ENCODE measurements at regions of chr3 and their contacts with region 1.

Region 1: DNA sequence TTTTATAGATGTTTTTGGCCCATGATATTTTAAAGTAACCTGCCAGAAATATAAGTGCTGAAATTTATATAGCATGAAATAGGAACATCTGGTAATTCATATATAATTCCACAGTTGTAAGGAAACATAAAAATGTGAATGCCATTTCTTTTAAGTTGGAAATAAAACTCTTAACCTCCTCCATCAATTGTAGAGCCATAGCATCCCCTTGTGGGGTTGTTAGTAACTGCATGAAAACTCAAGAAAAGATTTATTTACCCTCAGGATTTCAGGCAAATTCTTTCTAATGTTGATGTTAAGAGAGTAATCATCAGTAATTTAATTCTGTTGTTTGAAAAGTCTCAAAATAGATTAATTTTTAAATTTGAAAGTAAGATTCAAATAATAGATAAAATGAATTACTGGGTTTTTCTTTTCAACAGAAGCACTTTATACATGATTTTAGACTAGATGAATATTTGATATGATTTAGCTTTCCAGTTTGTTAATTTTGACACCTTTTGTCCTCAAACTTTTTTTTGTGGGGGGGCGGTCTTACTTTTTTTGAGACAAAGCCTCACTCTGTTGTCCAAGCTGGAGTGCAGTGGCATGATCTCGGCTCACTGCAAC is 74.7 kb downstream of the RASA2 start:
- DNase-seq: peak in 1 of 10 donors; percentile 9
- H3K4me3 ChIP-seq: no peak overlapping the region
- H3K27ac ChIP-seq: no peak overlapping the region
- H3K27me3 ChIP-seq: no peaks in the 10 kb centered on the region
- CTCF ChIP-seq: peak; percentile 83 to 100 (median 95)

Region 2: DNA sequence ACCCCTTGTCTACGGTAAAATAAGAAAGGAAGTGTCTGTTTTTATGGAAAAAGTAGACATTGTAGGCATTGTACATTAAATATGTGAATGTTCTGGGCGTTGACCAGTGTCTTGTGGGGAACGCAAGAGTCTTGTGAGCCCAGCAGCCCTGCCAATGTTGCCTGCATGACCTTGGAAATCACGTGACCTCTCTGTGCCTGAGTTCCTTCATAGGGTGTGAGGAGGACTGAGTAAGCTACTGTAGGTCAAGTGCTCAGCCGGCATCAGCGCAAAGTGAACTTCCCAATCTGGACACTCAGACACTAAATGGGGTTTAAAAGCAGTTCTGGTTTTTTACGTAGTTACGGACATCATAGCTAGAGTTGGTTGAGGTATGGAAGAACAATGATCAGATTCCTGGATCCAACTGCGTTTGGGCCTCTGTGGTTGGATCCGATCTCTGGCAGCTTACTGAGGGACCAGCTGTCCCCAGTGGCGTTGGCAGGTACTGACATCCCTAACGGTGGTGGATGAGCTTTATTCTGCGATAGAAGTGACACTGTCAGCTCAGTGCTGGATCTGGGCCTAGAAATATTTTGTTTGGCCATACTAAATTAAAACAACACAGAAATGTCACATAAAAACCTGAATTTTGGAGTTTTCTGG is 446.6 kb before region 1 on chr3:
- intact Hi-C with region 1: no loop called
- DNase-seq: peak in 1 of 10 donors; percentile 32
- H3K4me3 ChIP-seq: no peak overlapping the region
- H3K27ac ChIP-seq: no peak overlapping the region
- H3K27me3 ChIP-seq: no peaks in the 10 kb centered on the region
- CTCF ChIP-seq: peak in 23 of 56 donors; percentile 8 to 49 (median 24)

Region 3: GRCh38 chr3:141311496-141312353 is 249.8 kb before region 1 on chr3:
- intact Hi-C with region 1: loop called (anchors 5 to 10 kb)
- DNase-seq: peak; percentile 97 to 99 (median 98)
- H3K4me3 ChIP-seq: peak overlapping the region; percentile 54 to 94 (median 75)
- H3K27ac ChIP-seq: peak overlapping the region; percentile 36 to 95 (median 83)
- H3K27me3 ChIP-seq: no peaks in the 10 kb centered on the region
- CTCF ChIP-seq: peak; percentile 50 to 92 (median 82)

Region 4: DNA sequence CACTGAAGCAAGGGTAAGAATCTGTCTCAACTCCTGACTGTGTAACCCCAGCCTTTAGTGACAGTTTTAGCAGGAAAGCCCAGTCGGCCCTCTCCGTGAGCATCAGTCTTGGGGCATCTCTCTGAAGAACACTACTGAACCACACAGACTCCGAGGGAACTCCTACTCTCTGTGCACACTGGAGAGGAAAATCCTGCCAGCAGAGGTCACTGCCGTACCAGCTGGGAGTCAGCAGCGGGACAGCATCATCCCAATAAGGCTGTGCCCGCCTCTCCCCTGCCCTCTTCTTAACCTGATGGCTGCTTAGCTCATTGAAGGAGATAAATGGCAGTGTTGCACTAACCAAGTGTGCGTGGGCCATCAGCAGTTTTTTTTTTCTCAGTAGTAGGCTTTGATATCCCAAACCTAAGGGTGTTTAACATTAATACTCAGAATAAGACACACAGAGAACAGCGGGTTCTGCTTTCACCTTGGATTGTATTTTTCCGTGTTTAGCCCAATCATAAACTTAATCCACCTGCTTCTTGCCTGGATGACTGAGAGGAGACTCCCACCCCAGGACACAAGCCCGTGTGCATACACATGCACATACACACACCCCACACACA is 101.3 kb before region 1 on chr3:
- intact Hi-C with region 1: loop called (anchors 2 kb)
- DNase-seq: peak; percentile 80 to 92 (median 88)
- H3K4me3 ChIP-seq: no peak overlapping the region
- H3K27ac ChIP-seq: no peak overlapping the region
- H3K27me3 ChIP-seq: no peaks in the 10 kb centered on the region
- CTCF ChIP-seq: peak; percentile 50 to 98 (median 90)

Region 5: GRCh38 chr3:141482250-141483017 is 79.1 kb before region 1 on chr3:
- intact Hi-C with region 1: loop called in 1 of 2 experiments (anchors 5 kb)
- DNase-seq: no peak
- H3K4me3 ChIP-seq: no peak overlapping the region
- H3K27ac ChIP-seq: no peak overlapping the region
- H3K27me3 ChIP-seq: no peaks in the 10 kb centered on the region
- CTCF ChIP-seq: no peak

Region 6: DNA sequence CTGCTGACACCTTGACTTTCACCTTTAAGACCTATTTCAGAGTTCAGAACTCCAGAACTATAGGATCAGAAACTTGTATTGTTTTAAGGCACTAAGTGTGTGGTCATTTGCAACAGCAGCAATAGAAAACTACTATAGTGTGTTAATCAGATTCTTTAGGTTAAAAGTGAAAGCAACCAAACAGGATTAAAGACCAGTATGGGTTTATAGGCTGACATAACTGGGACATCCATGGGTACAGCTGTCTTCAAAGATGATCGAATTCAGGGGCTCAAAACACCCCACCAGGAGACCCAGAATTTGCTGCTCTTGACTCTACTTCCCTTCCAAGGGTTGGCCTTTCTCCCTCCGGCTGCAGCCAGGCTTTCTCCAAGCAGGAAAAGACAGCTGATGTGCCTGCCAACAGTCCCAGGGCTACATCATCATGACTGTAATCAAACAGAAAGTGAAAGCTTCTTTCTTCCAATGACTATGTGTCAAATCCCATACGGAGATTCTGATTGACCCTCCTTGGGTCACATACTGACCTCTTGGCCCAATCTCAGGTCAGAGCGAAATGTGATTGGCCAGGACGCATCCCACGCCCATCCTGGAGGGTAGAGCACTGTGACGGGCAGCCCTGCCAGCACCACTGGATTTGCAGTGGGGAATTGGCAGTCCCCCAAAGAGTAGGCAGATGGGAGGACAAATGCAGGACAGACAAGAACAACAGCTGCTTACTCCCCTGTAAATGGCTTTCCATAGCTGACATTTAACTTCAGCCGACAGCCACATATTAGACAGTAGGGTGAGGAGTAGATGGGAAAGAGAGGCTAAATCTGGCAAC is 125.1 kb after region 1 on chr3:
- intact Hi-C with region 1: no loop called
- DNase-seq: peak; percentile 20 to 88 (median 71)
- H3K4me3 ChIP-seq: peak overlapping the region; percentile 7 to 68 (median 44)
- H3K27ac ChIP-seq: peak overlapping the region in 57 of 59 donors; percentile 11 to 91 (median 73)
- H3K27me3 ChIP-seq: no peaks in the 10 kb centered on the region
- CTCF ChIP-seq: peak in 2 of 56 donors; percentile 12 to 21